ENCODE measurements at regions of chr19 and their contacts with region 1.

Region 1: DNA sequence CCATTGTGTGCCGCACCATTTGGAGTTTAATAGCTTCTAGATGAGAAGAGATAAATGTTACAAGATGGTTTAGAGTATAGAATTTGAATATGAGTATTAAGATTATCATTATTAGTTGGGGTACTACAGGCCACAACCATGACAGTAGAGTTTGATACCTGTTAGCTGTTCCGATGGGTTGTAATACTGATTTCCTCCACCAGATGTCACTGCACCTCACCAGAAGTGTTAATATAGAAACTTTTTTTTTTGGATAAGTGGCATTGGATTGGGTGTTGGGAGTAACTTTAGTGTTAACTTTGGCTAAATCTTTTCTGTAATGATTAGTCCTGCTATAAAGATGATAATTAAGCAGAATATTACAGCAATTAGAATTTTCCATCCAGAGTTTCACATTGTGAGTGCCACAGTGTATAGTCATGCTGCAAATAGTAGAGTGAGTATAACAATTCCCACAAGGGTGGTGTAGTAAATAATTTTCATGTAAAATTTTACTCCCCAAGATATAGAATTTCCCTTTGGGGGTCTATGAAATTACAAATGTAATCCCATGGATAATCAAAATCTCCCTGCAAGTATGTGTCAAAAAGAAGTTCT is 56.3 kb downstream of the PSG3 start:
- DNase-seq: peak in 1 of 2 experiments; percentile 51
- H3K4me3 ChIP-seq: no peak overlapping the region
- H3K4me3 Mint-ChIP-seq: no peak overlapping the region
- H3K27ac Mint-ChIP-seq: no peak overlapping the region
- H3K4me1 ChIP-seq: 0 out of 2 replicates have a peak, but pooled peaks cover 4% of the 10 kb centered on the region
- H3K4me1 Mint-ChIP-seq: no peaks in the 10 kb centered on the region
- H3K27me3 ChIP-seq: no peaks in the 10 kb centered on the region; the same call in 1 of the 2 replicates
- H3K27me3 Mint-ChIP-seq: no peaks in the 10 kb centered on the region
- CTCF ChIP-seq: peak; percentile 53 to 76

Region 2: DNA sequence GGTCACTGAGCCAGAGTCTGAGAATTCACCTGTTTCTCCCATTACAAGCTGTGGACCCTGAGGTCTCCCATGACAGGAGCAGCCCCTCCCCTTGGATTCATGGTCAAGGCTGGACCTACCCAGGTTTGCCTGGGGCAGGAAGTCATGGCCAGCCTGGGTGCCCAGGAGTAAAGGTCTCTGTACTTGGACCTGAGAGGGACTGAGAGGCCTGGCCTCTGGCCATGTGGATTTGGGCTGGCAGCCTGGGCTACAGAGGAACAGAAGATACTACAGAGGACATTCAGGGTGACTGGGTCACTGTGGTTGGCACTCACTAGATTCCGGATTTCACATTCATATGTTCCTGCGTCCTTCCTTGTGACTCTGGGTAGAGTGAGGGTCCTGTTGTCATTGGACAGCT is 57.8 kb before region 1 on chr19:
- CTCF ChIA-PET with region 1: no interaction called
- POLR2A ChIA-PET with region 1: no interaction called
- intact Hi-C with region 1: no loop called
- DNase-seq: no peak
- H3K4me3 ChIP-seq: no peak overlapping the region
- H3K4me3 Mint-ChIP-seq: no peak overlapping the region
- H3K27ac Mint-ChIP-seq: no peak overlapping the region
- H3K4me1 ChIP-seq: no peaks in the 10 kb centered on the region
- H3K4me1 Mint-ChIP-seq: no peaks in the 10 kb centered on the region
- H3K27me3 ChIP-seq: no peaks in the 10 kb centered on the region
- H3K27me3 Mint-ChIP-seq: peaks cover 6% of the 10 kb centered on the region
- CTCF ChIP-seq: no peak

Region 3: DNA sequence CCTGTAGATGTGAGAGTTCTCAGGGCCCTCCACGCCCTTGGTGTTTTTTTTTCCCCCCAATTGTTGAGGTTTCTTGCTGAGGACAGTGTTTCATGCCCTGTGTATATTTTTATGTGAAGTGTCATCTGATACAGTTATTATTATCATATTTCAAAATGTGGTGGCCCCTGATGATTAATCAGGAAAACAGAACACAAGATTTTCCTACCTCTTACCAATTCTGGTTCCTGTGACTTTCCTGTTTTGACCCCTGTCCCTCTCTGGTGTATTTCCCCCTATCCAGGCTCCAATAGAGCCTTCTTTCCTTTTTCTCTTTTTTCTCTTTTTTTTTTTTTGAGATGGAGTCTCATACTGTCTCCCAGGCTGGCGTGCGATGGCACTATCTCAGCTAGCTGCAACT is 80.8 kb after region 1 on chr19:
- CTCF ChIA-PET with region 1: no interaction called
- POLR2A ChIA-PET with region 1: no interaction called
- intact Hi-C with region 1: loop called (anchors 10 kb)
- DNase-seq: no peak
- H3K4me3 ChIP-seq: no peak overlapping the region
- H3K4me3 Mint-ChIP-seq: no peak overlapping the region
- H3K27ac Mint-ChIP-seq: no peak overlapping the region
- H3K4me1 ChIP-seq: peaks cover 10% of the 10 kb centered on the region; the same call in 1 of the 2 replicates
- H3K4me1 Mint-ChIP-seq: no peaks in the 10 kb centered on the region
- H3K27me3 ChIP-seq: no peaks in the 10 kb centered on the region
- H3K27me3 Mint-ChIP-seq: no peaks in the 10 kb centered on the region
- CTCF ChIP-seq: no peak